ENCODE measurements at regions of chr1 and their contacts with region 1.

Region 1: DNA sequence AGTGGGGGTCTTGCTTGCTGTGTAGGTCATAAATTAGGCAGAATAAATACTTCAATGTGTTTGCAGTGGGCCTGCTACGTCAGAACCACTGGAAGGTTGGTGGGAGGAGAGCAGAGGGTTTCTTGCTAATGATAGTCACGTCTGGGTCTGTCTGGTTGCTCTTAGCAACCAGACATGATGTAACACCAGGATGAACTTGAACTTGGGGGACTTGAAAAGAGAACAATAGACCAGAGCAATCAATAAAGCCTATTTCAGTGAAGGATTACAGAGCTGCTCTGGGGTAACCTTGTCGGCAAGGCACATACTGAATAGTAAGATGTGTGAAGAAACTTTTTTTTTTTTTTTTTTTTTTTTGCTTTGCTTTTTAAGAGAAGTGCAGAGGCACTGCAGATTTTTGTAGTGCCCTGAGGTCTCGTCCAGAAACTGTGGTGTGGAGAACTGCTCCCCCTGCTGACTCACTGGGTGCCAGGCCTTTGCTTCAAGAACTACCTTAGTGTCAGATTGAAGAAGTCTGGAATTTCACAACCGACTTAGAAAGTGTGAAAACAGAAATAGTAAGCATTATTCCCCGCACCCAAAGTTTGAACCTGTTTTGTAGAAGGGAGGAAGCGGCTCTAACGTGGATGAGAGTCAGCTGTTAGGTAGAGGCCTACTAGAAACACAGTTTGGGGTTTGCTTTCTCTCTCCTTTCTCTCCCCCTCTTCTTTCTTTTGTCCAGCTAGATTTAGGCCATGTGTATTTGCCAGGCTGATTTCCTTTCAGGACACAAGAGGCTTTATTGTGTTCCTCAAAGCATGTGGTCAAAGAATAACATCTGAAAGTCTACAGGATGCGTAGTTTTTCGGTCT is 271.6 kb downstream of the TM2D1 start:
- DNase-seq: peak; percentile 29 to 69 (median 59)
- ATAC-seq: peak; percentile 88
- H3K4me3 ChIP-seq: no peak overlapping the region
- H3K4me3 Mint-ChIP-seq: peak overlapping the region in 3 of 10 donors; percentile 14 to 39 (median 26)
- H3K27ac ChIP-seq: no peak overlapping the region
- H3K27ac Mint-ChIP-seq: peak overlapping the region in 6 of 9 donors; percentile 11 to 82 (median 44)
- H3K4me1 ChIP-seq: peaks cover 0 to 5% of the 10 kb centered on the region in 2 donors
- H3K4me1 Mint-ChIP-seq: peaks cover 0 to 13% (median 8%) of the 10 kb centered on the region in 7 donors
- H3K27me3 ChIP-seq: no peaks in the 10 kb centered on the region
- H3K27me3 Mint-ChIP-seq: peaks cover 0 to 2% (median 0%) of the 10 kb centered on the region in 5 donors

Region 2: DNA sequence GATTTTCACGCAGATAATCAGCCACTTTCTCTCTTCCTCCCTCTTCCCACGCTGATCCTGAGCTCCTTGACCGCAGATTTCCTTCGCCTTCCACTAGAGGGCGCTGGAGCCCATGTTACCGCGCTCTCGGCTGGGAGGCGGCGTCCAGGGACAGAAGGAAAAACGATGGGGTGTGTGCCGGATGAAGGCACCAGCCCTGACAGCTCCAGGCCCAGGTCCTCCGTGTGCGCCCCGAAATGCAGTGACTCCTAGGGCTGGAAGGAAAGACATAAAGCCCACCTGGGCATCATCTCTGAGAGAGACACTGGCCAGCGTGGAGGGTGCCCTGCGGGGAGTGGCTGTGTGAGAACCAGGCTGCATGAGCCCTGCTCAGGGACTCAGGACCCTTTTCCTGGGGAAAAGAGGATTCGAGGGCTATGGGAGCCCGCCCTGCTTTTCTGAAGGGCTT is 1481.8 kb before region 1 on chr1:
- CTCF ChIA-PET with region 1: no interaction called
- POLR2A ChIA-PET with region 1: no interaction called
- intact Hi-C with region 1: loop called (anchors 1 to 10 kb)
- DNase-seq: peak in 7 of 9 donors; percentile 22 to 63 (median 36)
- ATAC-seq: peak; percentile 64
- H3K4me3 ChIP-seq: no peak overlapping the region
- H3K4me3 Mint-ChIP-seq: peak overlapping the region in 2 of 10 donors; percentile 20 to 71
- H3K27ac ChIP-seq: no peak overlapping the region
- H3K27ac Mint-ChIP-seq: no peak overlapping the region
- H3K4me1 ChIP-seq: peaks cover 0 to 6% of the 10 kb centered on the region in 2 donors
- H3K4me1 Mint-ChIP-seq: peaks cover 0 to 7% (median 5%) of the 10 kb centered on the region in 7 donors
- H3K27me3 ChIP-seq: peaks cover 0 to 5% of the 10 kb centered on the region in 2 donors
- H3K27me3 Mint-ChIP-seq: peaks cover 16 to 44% (median 31%) of the 10 kb centered on the region in 5 donors

Region 3: GRCh38 chr1:60281360-60281932 is 1171.9 kb before region 1 on chr1:
- CTCF ChIA-PET with region 1: no interaction called
- POLR2A ChIA-PET with region 1: no interaction called
- intact Hi-C with region 1: loop called in 1 of 2 experiments (anchors 10 kb)
- DNase-seq: peak in 1 of 9 donors; percentile 1
- ATAC-seq: no peak
- H3K4me3 ChIP-seq: no peak overlapping the region
- H3K4me3 Mint-ChIP-seq: no peak overlapping the region
- H3K27ac ChIP-seq: no peak overlapping the region
- H3K27ac Mint-ChIP-seq: no peak overlapping the region
- H3K4me1 ChIP-seq: no peaks in the 10 kb centered on the region
- H3K4me1 Mint-ChIP-seq: peaks cover 0 to 14% (median 8%) of the 10 kb centered on the region in 7 donors
- H3K27me3 ChIP-seq: no peaks in the 10 kb centered on the region
- H3K27me3 Mint-ChIP-seq: no peaks in the 10 kb centered on the region

Region 4: GRCh38 chr1:60969971-60970509 is 483.3 kb before region 1 on chr1:
- CTCF ChIA-PET with region 1: no interaction called
- POLR2A ChIA-PET with region 1: no interaction called
- intact Hi-C with region 1: loop called in 1 of 2 experiments (anchors 1 kb)
- DNase-seq: no peak
- ATAC-seq: no peak
- H3K4me3 ChIP-seq: no peak overlapping the region
- H3K4me3 Mint-ChIP-seq: no peak overlapping the region
- H3K27ac ChIP-seq: no peak overlapping the region
- H3K27ac Mint-ChIP-seq: no peak overlapping the region
- H3K4me1 ChIP-seq: no peaks in the 10 kb centered on the region
- H3K4me1 Mint-ChIP-seq: peaks cover 0 to 1% (median 0%) of the 10 kb centered on the region in 7 donors
- H3K27me3 ChIP-seq: no peaks in the 10 kb centered on the region
- H3K27me3 Mint-ChIP-seq: peaks cover 9 to 28% (median 26%) of the 10 kb centered on the region in 5 donors

Region 5: GRCh38 chr1:61043010-61043820 is 410.1 kb before region 1 on chr1:
- CTCF ChIA-PET with region 1: no interaction called
- POLR2A ChIA-PET with region 1: no interaction called
- intact Hi-C with region 1: loop called in 1 of 2 experiments (anchors 2 kb)
- DNase-seq: peak; percentile 62 to 83 (median 78)
- ATAC-seq: peak; percentile 96
- H3K4me3 ChIP-seq: peak overlapping the region; percentile 35
- H3K4me3 Mint-ChIP-seq: peak overlapping the region; percentile 53 to 88 (median 73)
- H3K27ac ChIP-seq: no peak overlapping the region
- H3K27ac Mint-ChIP-seq: no peak overlapping the region
- H3K4me1 ChIP-seq: peaks cover 3 to 4% of the 10 kb centered on the region in 2 donors
- H3K4me1 Mint-ChIP-seq: peaks cover 0 to 4% (median 0%) of the 10 kb centered on the region in 7 donors
- H3K27me3 ChIP-seq: peaks cover 0 to 8% of the 10 kb centered on the region in 2 donors
- H3K27me3 Mint-ChIP-seq: peaks cover 28 to 67% (median 38%) of the 10 kb centered on the region in 5 donors

Region 6: GRCh38 chr1:61152469-61153105 is 300.7 kb before region 1 on chr1:
- CTCF ChIA-PET with region 1: no interaction called
- POLR2A ChIA-PET with region 1: no interaction called
- intact Hi-C with region 1: no loop called
- DNase-seq: no peak
- ATAC-seq: no peak
- H3K4me3 ChIP-seq: no peak overlapping the region
- H3K4me3 Mint-ChIP-seq: no peak overlapping the region
- H3K27ac ChIP-seq: no peak overlapping the region
- H3K27ac Mint-ChIP-seq: no peak overlapping the region
- H3K4me1 ChIP-seq: peaks cover 0 to 3% of the 10 kb centered on the region in 2 donors
- H3K4me1 Mint-ChIP-seq: peaks cover 5 to 13% (median 7%) of the 10 kb centered on the region in 7 donors
- H3K27me3 ChIP-seq: no peaks in the 10 kb centered on the region
- H3K27me3 Mint-ChIP-seq: peaks cover 0 to 41% (median 0%) of the 10 kb centered on the region in 5 donors

Region 7: DNA sequence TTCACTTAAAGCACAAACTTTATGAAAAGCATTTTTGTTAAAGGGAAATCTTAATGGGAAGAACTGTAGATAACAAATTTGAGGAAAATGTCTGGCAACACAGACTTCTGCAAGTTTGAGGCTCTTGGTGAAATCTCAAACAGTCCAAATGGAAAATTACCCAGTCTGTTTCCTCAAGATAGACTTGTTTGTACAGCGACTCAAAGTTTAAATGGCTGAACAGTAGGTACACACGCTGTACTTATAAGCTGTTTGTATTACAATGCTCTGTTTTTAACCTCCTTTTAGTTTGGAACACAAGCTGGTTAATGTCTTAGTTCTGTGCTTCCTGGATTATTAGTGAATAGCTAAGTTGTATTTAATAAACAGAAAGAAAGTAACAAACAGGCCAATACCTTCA is 153.9 kb before region 1 on chr1:
- CTCF ChIA-PET with region 1: no interaction called
- POLR2A ChIA-PET with region 1: no interaction called
- intact Hi-C with region 1: no loop called
- DNase-seq: no peak
- ATAC-seq: no peak
- H3K4me3 ChIP-seq: no peak overlapping the region
- H3K4me3 Mint-ChIP-seq: no peak overlapping the region
- H3K27ac ChIP-seq: no peak overlapping the region
- H3K27ac Mint-ChIP-seq: no peak overlapping the region
- H3K4me1 ChIP-seq: no peaks in the 10 kb centered on the region
- H3K4me1 Mint-ChIP-seq: peaks cover 0 to 24% (median 0%) of the 10 kb centered on the region in 7 donors
- H3K27me3 ChIP-seq: no peaks in the 10 kb centered on the region
- H3K27me3 Mint-ChIP-seq: peaks cover 0 to 4% (median 0%) of the 10 kb centered on the region in 5 donors

Region 8: GRCh38 chr1:61588736-61589672 is 135.7 kb after region 1 on chr1:
- CTCF ChIA-PET with region 1: no interaction called
- POLR2A ChIA-PET with region 1: no interaction called
- intact Hi-C with region 1: loop called in 1 of 2 experiments (anchors 10 kb)
- DNase-seq: peak in 8 of 9 donors; percentile 7 to 53 (median 46)
- ATAC-seq: peak; percentile 74
- H3K4me3 ChIP-seq: no peak overlapping the region
- H3K4me3 Mint-ChIP-seq: no peak overlapping the region
- H3K27ac ChIP-seq: no peak overlapping the region
- H3K27ac Mint-ChIP-seq: no peak overlapping the region
- H3K4me1 ChIP-seq: no peaks in the 10 kb centered on the region
- H3K4me1 Mint-ChIP-seq: peaks cover 0 to 3% (median 0%) of the 10 kb centered on the region in 7 donors
- H3K27me3 ChIP-seq: no peaks in the 10 kb centered on the region
- H3K27me3 Mint-ChIP-seq: peaks cover 0 to 10% (median 8%) of the 10 kb centered on the region in 5 donors

Region 9: DNA sequence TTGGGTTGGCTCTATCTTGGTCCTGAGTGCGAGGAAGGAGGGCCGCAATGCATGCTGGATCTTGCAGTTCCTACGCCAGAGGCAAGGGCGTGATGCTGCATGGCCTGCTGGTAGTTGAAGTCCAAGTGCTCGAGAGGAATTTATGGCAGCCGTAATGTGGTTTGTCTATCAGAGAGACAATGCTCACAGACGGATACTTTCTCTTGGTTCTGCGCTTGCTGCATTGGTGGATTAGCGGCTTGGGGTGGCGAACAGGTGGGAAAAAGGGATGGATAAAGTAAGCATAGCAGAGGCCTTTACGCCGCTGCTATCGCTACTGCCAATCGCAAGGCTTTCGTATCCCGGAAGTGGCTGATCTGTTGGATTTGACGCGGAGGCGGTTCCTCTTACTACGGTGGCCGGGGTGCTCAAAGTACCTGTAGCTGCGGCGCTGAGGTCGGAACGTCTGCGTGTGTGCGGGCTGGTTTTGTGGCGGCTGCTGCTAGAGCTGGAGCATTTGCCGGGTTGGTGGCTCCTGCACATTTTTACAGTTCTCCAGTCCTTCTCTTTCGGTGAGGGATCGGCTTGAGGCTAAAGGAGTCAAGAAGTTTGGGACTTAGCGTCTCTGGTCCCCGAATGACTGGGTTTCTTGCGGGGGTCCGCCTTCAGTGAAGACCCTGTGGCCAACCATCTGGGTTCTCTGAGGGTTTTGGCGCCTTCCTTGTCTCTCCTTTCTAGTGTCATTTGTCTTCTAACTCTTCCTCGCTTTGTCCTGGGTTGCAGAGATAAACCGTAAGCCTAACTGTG is 1330.6 kb after region 1 on chr1 and contains the start of gene ATG4C:
- CTCF ChIA-PET with region 1: no interaction called
- POLR2A ChIA-PET with region 1: no interaction called
- intact Hi-C with region 1: no loop called
- DNase-seq: peak; percentile 72 to 97 (median 96)
- ATAC-seq: peak; percentile 96
- H3K4me3 ChIP-seq: peak within 1 kb of the TSS; percentile 94
- H3K4me3 Mint-ChIP-seq: peak within 1 kb of the TSS in 1 of 10 donors; percentile 14
- H3K27ac ChIP-seq: peak within 1 kb of the TSS; percentile 87
- H3K27ac Mint-ChIP-seq: no peak within 1 kb of the TSS
- H3K4me1 ChIP-seq: peaks cover 6 to 7% of the 10 kb centered on the region in 2 donors
- H3K4me1 Mint-ChIP-seq: peaks cover 9 to 21% (median 20%) of the 10 kb centered on the region in 7 donors
- H3K27me3 ChIP-seq: peaks cover 0 to 6% of the 10 kb centered on the region in 2 donors
- H3K27me3 Mint-ChIP-seq: peaks cover 0 to 16% (median 3%) of the 10 kb centered on the region in 5 donors
- total RNA-seq, gene ATG4C: 6.8 to 16.5 (median 11.5) TPM

Measured in naive thymus-derived CD4-positive, alpha-beta T cell (primary cell).